ENCODE measurements at regions of chr14 and their contacts with region 1.

Region 1: DNA sequence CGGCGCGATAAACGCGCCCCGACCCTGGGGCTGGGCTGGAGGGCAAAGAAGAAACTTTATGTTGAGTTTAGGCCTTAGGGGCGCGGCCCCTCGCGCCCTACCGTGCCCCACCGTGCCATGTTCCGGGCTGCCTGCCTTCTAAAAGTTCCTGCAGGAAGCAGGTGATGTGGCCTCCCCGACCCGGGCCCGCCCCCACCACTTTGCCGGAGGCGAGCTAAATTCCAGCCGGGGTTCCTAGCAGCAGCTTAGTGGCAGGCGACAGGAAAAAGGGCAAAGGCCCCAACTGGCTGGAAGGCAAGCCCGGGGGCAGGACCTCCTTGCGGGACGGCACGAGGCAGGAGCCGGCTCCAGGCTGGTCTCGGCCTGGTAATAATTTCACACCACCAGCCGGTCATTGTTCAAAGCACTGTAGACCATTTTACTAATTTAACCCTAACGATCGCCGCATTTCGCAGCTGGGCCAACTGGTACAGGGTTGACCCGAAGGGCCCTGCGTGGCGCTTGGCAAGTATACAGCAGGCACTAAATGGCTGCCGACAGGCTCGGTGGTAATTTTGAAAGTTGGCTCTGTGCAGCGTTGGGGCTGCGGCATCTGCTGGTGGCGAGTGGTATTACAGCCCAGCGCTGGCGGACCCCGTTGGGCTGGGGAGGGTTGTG is 895 bp upstream of the CCDC88C start:
- DNase-seq: peak; percentile 84
- H3K4me3 Mint-ChIP-seq: peak overlapping the region; percentile 64
- H3K27ac Mint-ChIP-seq: peak overlapping the region; percentile 74
- H3K4me1 Mint-ChIP-seq: peaks cover 32% of the 10 kb centered on the region
- H3K27me3 Mint-ChIP-seq: no peaks in the 10 kb centered on the region

Region 2: GRCh38 chr14:90903101-90903500 is 515.4 kb before region 1 on chr14:
- CTCF ChIA-PET with region 1: no interaction called
- intact Hi-C with region 1: loop called (anchors 2 kb)
- DNase-seq: peak; percentile 81
- H3K4me3 Mint-ChIP-seq: no peak overlapping the region
- H3K27ac Mint-ChIP-seq: no peak overlapping the region
- H3K4me1 Mint-ChIP-seq: peaks cover 25% of the 10 kb centered on the region
- H3K27me3 Mint-ChIP-seq: no peaks in the 10 kb centered on the region

Region 3: DNA sequence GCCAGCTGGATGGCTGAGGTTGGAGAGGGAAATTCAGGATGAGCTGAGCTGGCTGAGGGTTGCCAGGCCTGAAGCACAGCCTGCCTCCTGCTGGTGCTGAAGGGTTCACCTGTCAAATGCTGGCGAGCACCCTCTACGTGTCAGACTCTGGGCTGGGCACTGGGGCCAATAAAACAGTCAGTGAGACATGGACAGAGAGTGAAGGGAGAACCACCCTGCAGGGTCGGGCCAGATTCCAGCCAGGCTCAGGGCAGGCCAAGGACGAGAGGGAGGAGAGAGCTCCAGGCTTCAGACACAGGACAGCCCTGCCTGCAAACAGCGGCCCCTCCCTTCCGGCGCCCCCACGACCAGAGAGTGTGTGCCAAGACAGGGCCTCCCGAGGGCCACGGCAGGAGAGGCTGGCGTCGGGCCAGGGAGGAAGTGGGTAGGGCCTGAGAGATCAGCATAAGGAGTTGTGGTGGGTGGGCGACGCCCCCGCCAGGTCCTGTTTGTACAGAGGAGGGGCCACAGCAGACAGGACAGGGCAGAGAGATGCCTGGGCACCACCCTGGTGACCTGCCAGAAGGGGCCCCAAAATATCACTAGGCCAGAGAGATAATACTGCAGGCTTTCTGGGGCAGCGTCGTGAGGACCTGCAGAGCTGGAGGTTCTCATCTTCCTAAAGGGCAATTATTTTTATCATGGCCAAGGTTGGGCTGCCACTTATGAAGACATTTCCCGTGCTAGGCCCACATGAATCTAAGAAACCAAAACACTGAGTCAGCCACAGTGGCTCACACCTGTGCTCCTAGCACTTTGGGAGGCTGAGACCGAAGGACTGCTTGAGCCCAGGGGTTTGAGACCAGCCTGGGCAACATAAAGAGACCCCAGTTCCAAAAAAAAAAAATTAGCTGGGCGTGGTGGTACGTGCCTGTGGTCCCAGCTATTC is 100.9 kb before region 1 on chr14:
- CTCF ChIA-PET with region 1: interaction called, 99 read pairs
- intact Hi-C with region 1: loop called (anchors 1 kb)
- DNase-seq: peak; percentile 87
- H3K4me3 Mint-ChIP-seq: peak overlapping the region; percentile 60
- H3K27ac Mint-ChIP-seq: peak overlapping the region; percentile 95
- H3K4me1 Mint-ChIP-seq: peaks cover 72% of the 10 kb centered on the region
- H3K27me3 Mint-ChIP-seq: no peaks in the 10 kb centered on the region

Region 4: DNA sequence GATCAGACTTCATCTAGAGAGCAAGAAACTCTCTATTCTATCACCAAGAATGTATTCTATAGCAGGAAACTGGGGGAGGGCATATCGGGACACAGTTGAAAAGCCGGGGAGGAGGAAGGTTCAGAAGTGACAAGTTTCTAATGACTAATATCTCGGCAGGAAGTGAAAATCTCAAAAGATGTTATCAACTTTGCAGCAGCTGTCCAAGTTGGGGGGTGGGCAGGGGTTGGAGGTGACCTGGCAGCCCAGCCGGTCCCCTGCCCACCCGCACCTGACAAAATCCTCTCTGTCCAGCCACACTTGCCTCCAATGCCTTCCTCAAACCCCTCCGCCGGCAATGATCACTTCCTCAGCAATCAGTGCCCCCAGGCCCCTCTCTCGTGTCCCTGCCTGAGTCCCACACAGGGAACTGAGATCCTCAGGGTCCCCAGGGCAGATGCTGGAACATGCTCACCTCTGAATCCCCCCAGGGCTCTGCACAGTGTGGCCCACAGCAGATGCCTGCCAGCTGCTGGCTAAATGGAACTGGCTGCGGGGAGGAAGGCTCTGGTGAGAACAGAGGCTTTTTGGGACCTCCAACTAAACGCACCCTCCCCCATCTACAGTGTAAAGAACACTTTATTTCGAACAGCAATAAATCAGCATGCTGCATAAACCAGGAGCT is 44.8 kb before region 1 on chr14:
- CTCF ChIA-PET with region 1: interaction called, 7 read pairs
- intact Hi-C with region 1: loop called (anchors 1 kb)
- DNase-seq: peak; percentile 83
- H3K4me3 Mint-ChIP-seq: peak overlapping the region; percentile 58
- H3K27ac Mint-ChIP-seq: peak overlapping the region; percentile 93
- H3K4me1 Mint-ChIP-seq: peaks cover 99% of the 10 kb centered on the region
- H3K27me3 Mint-ChIP-seq: no peaks in the 10 kb centered on the region

Region 5: DNA sequence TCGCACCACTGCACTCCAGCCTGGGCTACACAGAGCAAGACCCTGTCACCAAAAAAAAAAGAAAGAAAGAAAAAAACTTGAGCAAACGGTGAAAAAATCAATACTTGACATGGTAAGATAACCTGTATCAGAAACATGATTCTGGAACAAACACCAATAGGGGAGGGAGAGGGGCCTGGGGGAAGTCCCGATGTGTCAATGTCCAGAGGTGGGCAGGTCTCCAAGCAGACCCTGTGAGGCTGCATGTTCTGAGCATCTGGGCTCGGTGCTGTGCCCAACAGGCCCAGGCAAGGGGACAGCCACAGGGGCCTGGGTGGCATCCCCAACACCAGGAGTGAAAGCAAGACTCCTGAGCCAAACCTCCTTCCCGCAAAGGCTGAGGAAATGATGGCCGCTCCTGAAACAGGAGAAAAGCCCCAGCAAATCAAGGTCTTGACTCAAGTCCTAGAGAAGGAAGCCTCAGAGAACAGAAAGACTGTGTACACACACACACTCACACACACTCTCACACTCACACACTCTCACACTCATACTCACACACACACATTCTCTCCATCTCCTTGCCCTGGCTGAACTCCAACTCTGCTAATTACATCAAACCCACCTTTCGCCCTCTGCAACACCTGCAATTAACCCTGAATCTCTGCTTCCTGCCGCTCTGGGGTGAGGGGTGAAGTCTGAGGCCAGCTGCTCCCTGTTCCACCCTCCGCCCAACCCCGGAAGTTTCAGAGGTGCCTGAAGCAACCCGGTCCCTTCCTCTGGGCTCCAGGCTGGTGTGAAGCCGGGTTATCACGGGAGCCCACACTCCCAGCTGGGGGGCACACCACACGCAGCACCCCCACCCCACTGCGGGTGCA is 21.3 kb before region 1 on chr14:
- CTCF ChIA-PET with region 1: interaction called, 94 read pairs
- intact Hi-C with region 1: loop called (anchors 1 kb)
- DNase-seq: peak; percentile 88
- H3K4me3 Mint-ChIP-seq: peak overlapping the region; percentile 64
- H3K27ac Mint-ChIP-seq: peak overlapping the region; percentile 87
- H3K4me1 Mint-ChIP-seq: peaks cover 92% of the 10 kb centered on the region
- H3K27me3 Mint-ChIP-seq: no peaks in the 10 kb centered on the region

Region 6: DNA sequence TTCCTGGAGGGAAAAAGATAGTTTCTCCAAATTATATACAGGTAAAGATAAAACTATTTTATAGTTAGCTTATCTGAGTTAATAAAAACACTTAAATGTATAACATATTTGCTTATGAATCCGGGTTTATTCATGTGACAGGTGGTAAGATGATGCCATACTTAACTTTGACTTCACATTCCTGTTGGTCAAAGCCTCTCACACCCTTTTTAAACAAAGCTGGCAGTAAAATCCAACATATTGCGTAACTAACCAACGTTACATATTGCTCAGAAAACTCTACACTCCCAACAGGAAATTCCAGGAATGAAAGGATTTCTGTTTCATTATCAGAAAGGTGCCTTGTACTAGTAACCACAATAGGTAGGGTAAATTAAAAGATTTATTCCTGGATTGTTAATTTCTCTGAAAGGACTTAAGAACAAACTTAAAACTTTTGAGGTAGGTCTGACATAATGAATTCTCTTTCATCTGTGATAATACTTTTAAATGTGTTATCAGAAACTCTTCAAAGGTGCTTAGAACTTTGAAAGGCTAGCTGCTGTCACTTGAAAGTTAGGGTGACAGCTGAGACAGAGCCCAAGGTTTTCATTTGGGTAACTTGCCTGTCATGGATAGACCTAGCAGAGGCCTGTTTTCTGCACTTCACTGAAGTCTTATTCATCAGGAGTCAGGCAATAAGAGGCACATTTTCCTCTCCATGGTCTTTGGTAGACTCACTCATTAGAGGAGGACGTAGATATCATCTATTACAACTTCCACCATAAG is 337.2 kb after region 1 on chr14:
- CTCF ChIA-PET with region 1: no interaction called
- intact Hi-C with region 1: no loop called
- DNase-seq: no peak
- H3K4me3 Mint-ChIP-seq: no peak overlapping the region
- H3K27ac Mint-ChIP-seq: no peak overlapping the region
- H3K4me1 Mint-ChIP-seq: no peaks in the 10 kb centered on the region
- H3K27me3 Mint-ChIP-seq: no peaks in the 10 kb centered on the region

Measured in activated naive CD4-positive, alpha-beta T cell treated with anti-CD3 and anti-CD28 coated beads for 36 hours (primary cell).